Left ventricle myocardium inferior (tissue), 1 donor: ENCODE measurements at regions of chr16 and their contacts with region 1.

Region 1: DNA sequence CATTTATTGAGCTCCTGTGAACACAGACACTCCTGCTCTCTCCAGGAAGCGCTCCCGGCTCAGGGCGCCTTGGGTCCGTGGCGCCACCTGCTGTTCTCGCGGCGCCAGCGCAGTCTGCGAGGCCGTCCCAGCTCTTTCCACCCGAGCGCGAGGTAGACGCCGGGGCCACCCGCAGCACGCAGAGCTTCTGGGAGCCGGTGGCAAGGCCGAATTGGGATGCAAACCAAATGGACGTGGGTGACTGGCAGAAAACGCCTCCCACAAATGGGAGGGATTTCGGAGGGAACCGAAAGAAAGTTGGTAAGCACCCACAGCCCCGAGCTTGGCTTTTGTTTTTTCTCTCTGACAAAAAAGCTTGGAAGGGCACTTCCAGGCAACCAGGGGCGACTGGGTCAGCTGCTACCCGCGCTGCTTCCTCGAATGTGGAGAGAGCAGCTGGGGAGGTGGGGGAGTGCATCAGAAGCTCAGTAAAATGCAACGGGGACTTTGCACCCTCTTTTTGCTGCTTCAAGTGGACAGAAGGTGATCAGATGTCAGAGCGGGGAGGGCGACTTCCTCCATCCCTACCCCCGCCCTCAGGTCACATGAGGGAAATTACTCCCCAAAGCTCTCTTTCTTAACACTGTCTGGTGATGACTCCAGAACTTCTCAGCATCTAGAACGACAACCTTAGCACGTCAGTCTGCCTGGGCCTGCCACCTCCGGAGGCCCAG is 13.5 kb upstream of the N4BP1 start:
- DNase-seq: peak; percentile 84
- H3K4me3 ChIP-seq: peak overlapping the region; percentile 70
- H3K27ac ChIP-seq: peak overlapping the region; percentile 85
- H3K4me1 ChIP-seq: peaks cover 55% of the 10 kb centered on the region
- H3K27me3 ChIP-seq: no peaks in the 10 kb centered on the region
- CTCF ChIP-seq: peak; percentile 100

Region 2: DNA sequence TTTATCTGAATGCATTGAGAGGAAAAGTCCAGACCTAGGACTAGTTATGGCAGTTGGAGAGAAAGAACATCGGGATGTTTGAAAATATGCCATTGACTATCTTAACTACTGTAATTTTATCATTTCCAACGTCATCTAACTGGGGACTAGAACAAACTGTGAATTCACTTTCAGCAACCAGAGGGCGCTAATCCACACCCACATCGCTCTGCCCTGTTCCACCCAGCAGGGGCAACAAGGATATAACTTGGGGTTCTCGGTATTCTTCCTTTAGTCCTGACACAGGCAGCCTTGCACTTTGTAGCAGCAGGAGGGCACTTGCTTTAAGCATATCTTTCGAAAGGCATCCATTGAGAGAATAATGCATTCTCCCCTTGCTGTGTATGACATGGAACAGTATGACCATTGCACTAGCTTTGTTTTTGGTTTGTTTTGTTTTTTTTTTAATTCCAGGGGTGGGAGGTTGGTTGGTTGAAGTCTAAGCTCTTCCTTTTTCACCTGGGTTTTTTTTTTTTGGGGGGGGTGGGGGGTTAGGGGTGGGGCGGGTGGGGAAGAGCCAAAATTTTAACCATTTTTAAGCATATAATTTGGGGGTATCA is 269.8 kb before region 1 on chr16:
- intact Hi-C with region 1: loop called (anchors 10 kb)
- DNase-seq: no peak
- H3K4me3 ChIP-seq: no peak overlapping the region
- H3K27ac ChIP-seq: peak overlapping the region; percentile 2
- H3K4me1 ChIP-seq: peaks cover 24% of the 10 kb centered on the region
- H3K27me3 ChIP-seq: no peaks in the 10 kb centered on the region
- CTCF ChIP-seq: peak; percentile 90

Region 3: GRCh38 chr16:48444574-48444973 is 178.9 kb before region 1 on chr16:
- intact Hi-C with region 1: no loop called
- DNase-seq: no peak
- H3K4me3 ChIP-seq: no peak overlapping the region
- H3K27ac ChIP-seq: peak overlapping the region; percentile 81
- H3K4me1 ChIP-seq: peaks cover 17% of the 10 kb centered on the region
- H3K27me3 ChIP-seq: no peaks in the 10 kb centered on the region
- CTCF ChIP-seq: no peak

Region 4: DNA sequence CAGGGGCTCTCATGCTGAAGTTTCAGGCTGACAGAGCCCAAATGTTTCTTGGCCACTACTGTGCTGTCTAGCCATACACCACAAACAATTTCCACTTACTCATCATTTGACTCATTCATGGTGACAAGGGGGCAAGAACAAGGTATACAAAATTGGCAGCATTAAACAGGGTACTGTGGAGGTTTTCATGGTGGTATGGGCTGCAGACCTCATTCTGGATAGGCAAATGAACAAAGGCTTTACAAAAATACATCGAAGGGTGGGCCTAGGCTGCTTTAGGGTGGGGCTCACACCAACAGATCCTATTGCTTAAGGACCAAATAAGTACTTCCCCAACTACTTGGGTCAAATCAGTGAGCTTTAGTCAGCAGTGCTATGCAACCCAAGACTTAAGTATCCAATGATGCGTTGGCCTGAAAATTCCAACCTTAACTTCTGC is 66.5 kb before region 1 on chr16:
- intact Hi-C with region 1: loop called (anchors 5 kb)
- DNase-seq: no peak
- H3K4me3 ChIP-seq: no peak overlapping the region
- H3K27ac ChIP-seq: peak overlapping the region; percentile 57
- H3K4me1 ChIP-seq: peaks cover 89% of the 10 kb centered on the region
- H3K27me3 ChIP-seq: no peaks in the 10 kb centered on the region
- CTCF ChIP-seq: no peak